ENCODE measurements at regions of chr21 and their contacts with region 1.

Region 1: GRCh38 chr21:31198575-31198974 is 145.5 kb downstream of the TIAM1 start:
- DNase-seq: peak; percentile 72

Region 2: DNA sequence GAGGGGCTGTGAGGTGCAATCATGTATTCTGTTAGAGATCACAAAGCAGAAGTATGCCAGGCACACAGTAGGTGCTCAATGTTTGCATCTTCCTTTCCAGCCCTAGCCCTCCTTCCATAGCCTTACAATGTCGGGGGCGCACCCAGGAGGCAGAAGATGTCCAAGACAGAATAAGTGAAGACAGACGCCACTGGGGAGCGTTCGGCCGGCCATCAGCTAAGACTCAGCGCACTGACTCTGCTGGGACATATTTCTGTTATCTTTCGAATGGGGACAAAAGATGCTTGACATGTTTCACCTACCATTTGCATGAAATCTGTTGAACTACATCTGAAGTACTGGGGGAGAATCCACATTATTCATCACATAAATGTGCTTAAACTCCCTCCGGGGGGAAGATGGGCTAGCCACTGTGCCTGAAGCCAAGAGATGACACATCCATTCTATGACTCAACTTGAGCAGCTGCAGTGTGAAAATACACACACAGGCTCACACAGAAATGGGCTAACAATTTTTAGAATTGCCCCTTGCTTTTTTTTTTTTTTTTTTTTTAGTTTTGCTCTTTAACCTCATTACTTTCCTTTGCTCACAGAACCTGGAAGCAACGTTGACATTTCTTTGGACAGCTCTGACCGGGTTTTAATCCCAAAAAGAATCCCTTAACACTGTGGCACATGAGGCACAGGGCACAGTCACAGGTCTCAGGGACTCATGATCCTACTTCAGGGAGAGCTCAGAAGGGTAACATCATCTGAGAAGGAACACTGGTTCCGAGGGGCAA is 137.6 kb after region 1 on chr21:
- in situ Hi-C with region 1: no loop called
- DNase-seq: no peak

Region 3: GRCh38 chr21:31580866-31581276 is 382.3 kb after region 1 on chr21:
- in situ Hi-C with region 1: loop called (anchors 25 kb)
- DNase-seq: peak; percentile 62

Measured in KBM-7 (cell line).